ENCODE measurements at regions of chr7 and their contacts with region 1.

Region 1: GRCh38 chr7:100852048-100852872 is at the start of gene SLC12A9:
- DNase-seq: peak; percentile 94
- ATAC-seq: peak; percentile 99
- total RNA-seq, gene SLC12A9: 28.7 TPM

Region 2: DNA sequence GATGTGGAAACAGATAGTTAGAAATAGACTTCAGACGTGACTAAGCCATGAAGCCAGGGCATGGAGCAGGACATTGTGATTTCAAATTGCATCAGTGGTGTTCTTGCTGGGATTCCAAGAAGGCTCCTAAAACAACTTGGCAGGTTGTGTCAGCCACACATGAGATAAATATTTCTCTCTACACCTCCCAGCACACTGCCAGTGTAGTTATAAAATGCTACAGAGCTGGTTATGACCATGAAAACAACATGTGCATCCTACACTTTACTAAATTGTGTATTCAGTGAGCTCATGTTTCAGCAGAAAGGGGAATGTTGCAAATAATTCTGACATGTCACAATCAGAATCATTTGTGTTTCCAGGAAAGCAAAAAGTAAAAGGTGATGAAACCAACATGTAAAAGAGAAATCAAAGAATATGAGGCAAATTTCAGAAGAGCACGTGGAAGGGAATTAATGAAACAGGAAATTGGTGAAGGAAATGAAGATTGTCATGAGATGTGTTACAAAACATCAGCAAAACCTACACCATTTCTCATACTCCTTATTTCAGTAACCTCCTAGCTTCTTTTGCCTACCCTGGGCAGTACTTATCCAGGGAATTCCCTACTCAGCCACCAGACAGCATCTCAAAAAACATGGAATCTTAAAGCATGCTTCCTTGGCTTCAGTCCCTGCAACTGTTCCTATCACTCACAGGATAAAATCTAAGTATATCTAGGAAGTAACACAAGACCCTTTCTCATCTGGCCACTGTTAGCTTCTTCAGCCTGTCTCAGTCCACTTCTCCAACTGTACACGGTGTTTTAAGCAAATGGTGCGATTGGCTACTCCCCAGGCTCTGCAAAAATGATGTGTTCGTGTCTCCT is 1111.5 kb before region 1 on chr7:
- intact Hi-C with region 1: no loop called
- DNase-seq: no peak
- ATAC-seq: peak; percentile 65

Region 3: GRCh38 chr7:100705753-100706671 is 146.2 kb before region 1 on chr7 and contains the start of gene POP7:
- intact Hi-C with region 1: loop called (anchors 2 kb)
- DNase-seq: peak; percentile 100
- ATAC-seq: peak; percentile 98
- total RNA-seq, gene POP7: 16.6 TPM

Region 4: GRCh38 chr7:100803398-100804233 is 48.6 kb before region 1 on chr7:
- intact Hi-C with region 1: loop called (anchors 5 kb)
- DNase-seq: peak; percentile 84
- ATAC-seq: peak; percentile 96

Region 5: DNA sequence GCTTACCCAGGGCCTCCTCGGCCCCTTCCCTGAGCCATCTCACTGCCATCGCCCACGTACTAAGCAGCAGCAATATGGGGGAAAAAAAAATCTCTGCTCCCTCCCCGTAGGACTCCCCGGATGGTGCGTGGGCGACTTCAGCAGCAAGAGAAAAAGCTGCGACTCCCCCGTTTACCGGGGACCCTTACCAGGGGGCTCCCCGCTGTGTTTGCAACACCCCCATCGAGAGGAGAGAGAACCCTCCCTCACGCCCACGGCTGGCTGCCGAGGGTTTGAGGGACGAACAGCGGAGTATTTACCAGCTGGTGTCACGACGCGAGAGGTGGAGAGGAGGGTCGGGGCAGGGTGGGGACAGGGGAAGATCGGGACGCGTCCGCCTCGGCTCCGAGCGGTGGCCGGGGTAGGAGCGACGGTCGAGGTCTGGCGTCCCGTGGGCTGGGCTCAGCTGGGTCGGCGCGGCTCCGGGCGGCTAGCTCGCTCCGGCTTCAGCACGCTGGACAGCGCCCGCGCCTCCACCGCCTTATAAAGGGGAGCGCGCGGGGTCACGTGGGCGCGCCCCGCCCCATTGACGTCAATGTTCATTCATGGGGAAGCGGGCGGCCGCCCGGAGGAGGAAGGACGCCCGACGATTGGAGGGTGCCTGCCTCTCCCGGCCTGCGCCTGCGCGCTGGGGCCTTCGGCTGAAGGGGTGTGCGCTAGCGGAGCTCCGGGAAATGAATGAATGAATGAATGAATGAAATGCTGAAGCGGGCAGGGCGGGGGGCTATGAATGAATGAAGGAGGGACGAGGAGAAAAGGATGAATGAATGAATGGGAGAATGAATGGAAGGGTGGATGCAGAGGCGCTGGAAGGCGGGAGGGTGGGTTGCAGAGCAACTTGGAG is 313.1 kb after region 1 on chr7 and contains the start of gene VGF:
- intact Hi-C with region 1: no loop called
- DNase-seq: peak; percentile 93
- ATAC-seq: peak; percentile 92
- total RNA-seq, gene VGF: not detected

Region 6: DNA sequence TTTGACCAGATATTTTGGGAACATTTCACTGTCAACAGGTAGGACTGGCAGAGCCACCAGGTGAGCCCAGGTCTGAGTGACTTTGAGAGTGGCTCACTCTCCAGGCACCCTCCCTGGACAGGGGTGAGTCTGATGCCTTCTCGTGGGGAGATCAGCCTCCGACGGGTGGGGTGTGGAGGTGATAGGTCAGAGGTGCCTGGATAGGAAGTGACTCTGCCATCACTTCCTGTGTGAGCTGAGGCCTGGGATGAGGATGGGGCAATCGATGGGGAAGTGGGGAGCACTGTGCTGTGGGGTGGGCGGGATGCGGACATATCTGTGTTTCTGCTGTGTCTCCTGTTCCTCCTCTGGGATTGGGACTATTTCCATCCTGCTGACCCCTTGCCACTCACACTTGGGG is 434.8 kb after region 1 on chr7:
- intact Hi-C with region 1: no loop called
- DNase-seq: no peak
- ATAC-seq: no peak